ENCODE measurements at regions of chr20 and their contacts with region 1.

Region 1: GRCh38 chr20:38926142-38926933 is at the start of gene FAM83D:
- DNase-seq: peak; percentile 97
- H3K4me3 Mint-ChIP-seq: peak within 1 kb of the TSS; percentile 86
- H3K27ac Mint-ChIP-seq: peak within 1 kb of the TSS; percentile 81
- H3K4me1 Mint-ChIP-seq: peaks cover 39% of the 10 kb centered on the region
- H3K27me3 Mint-ChIP-seq: no peaks in the 10 kb centered on the region
- total RNA-seq, gene FAM83D: 11.0 and 12.4 TPM in 2 replicates

Region 2: DNA sequence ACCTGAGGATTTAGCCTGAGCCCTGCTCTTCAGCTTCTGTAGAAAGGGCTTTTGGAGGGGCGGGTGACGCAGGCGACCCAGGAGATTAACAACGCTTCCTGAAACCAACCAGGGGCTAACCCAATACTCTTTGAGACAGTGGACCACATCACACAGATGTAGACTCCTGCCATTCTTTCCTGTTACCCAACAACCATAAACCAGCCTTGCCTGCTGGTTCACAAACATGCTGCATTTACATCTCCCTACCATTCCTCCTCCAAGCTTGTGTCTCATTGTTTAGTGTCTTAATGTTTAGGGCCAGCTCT is 92.5 kb before region 1 on chr20:
- intact Hi-C with region 1: no loop called
- DNase-seq: no peak
- H3K4me3 Mint-ChIP-seq: peak overlapping the region; percentile 47
- H3K27ac Mint-ChIP-seq: peak overlapping the region; percentile 87
- H3K4me1 Mint-ChIP-seq: peaks cover 54% of the 10 kb centered on the region
- H3K27me3 Mint-ChIP-seq: no peaks in the 10 kb centered on the region

Region 3: GRCh38 chr20:38941726-38942389 is 15.5 kb after region 1 on chr20:
- intact Hi-C with region 1: loop called (anchors 2 kb)
- DNase-seq: no peak
- H3K4me3 Mint-ChIP-seq: no peak overlapping the region
- H3K27ac Mint-ChIP-seq: no peak overlapping the region
- H3K4me1 Mint-ChIP-seq: peaks cover 10% of the 10 kb centered on the region
- H3K27me3 Mint-ChIP-seq: no peaks in the 10 kb centered on the region

Region 4: DNA sequence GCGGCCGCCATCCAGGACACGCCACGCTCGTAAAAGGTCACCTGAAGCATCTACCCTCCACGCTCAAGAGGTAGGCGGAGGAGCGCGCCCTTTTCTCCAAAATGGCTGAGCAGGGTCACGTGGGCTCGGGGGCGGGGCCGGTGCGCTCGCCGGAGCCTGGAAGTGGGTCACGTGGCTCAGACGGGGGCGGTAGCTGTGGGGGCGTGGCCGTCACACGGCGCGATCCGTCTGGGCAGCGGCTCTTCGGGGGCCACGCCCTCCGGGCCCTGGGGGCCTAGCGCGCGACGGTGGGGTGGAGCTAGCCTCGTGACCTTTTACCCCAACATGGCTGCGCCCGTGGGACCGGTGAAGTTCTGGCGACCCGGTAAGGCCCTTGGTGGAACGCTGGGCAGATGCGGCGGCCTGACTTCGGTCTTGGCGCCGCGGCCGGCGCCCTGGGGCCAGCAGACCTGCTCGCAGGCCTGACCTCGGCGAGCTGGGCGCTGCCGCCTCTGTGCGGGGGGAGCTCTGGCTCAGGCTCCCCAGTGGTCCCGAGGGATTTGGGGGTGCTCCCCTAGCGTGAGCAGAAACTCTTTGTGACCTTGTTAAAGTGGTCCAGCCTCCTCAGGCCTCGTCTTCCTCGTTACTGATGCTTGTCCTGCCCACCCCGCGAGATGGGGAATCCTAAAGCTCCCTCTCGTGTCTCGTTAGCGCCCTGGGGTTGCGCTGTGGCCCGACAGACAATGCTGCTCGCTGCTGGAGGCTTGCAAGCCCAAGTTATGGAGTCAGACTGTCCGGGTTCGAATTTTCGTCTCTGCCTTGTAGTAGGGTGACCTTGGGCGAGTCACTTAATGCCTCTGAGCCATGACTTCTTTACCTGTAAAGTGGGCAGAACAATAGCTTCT is 35.9 kb after region 1 on chr20 and contains the start of gene DHX35:
- intact Hi-C with region 1: loop called (anchors 1 kb)
- DNase-seq: peak; percentile 99
- H3K4me3 Mint-ChIP-seq: peak within 1 kb of the TSS; percentile 98
- H3K27ac Mint-ChIP-seq: peak within 1 kb of the TSS; percentile 94
- H3K4me1 Mint-ChIP-seq: peaks cover 35% of the 10 kb centered on the region
- H3K27me3 Mint-ChIP-seq: no peaks in the 10 kb centered on the region
- total RNA-seq, gene DHX35: 17.2 and 17.3 TPM in 2 replicates

Region 5: GRCh38 chr20:38997622-38998021 is 71.3 kb after region 1 on chr20:
- intact Hi-C with region 1: loop called (anchors 1 kb)
- DNase-seq: peak; percentile 15
- H3K4me3 Mint-ChIP-seq: peak overlapping the region; percentile 46
- H3K27ac Mint-ChIP-seq: peak overlapping the region; percentile 71
- H3K4me1 Mint-ChIP-seq: peaks cover 38% of the 10 kb centered on the region
- H3K27me3 Mint-ChIP-seq: no peaks in the 10 kb centered on the region

Region 6: DNA sequence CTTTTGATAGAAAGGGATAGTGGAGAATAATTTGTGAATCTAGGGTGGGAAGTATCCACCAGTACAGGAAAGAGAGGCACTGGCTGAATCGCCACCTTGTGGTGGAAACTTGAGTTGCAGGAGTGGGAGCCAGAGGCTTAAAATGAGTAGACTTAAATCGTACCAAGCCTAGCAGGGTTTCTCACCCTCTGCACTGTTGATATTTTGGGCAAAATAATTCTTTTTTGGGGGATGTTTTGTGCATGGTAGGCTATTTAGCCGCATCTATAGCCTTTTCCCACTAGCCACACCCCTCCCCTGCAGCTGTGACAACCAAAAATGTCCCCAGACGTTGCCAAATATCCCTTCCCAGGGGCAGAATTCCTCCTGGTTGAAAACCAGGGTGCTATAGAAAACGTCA is 154.9 kb after region 1 on chr20:
- intact Hi-C with region 1: loop called (anchors 1 kb)
- DNase-seq: peak; percentile 64
- H3K4me3 Mint-ChIP-seq: no peak overlapping the region
- H3K27ac Mint-ChIP-seq: no peak overlapping the region
- H3K4me1 Mint-ChIP-seq: peaks cover 7% of the 10 kb centered on the region
- H3K27me3 Mint-ChIP-seq: peaks cover 16% of the 10 kb centered on the region